Endothelial cell of umbilical vein (primary cell): ENCODE measurements at regions of chrX and their contacts with region 1.

Region 1: GRCh38 chrX:120664081-120664480 is 34.2 kb upstream of the C1GALT1C1 start:
- DNase-seq: peak; percentile 46
- H3K4me3 ChIP-seq: no peak overlapping the region
- H3K27ac ChIP-seq: no peak overlapping the region
- H3K4me1 ChIP-seq: peaks cover 5% of the 10 kb centered on the region
- H3K27me3 ChIP-seq: no peaks in the 10 kb centered on the region
- CTCF ChIP-seq: no peak
- POLR2A ChIP-seq: no peak

Region 2: DNA sequence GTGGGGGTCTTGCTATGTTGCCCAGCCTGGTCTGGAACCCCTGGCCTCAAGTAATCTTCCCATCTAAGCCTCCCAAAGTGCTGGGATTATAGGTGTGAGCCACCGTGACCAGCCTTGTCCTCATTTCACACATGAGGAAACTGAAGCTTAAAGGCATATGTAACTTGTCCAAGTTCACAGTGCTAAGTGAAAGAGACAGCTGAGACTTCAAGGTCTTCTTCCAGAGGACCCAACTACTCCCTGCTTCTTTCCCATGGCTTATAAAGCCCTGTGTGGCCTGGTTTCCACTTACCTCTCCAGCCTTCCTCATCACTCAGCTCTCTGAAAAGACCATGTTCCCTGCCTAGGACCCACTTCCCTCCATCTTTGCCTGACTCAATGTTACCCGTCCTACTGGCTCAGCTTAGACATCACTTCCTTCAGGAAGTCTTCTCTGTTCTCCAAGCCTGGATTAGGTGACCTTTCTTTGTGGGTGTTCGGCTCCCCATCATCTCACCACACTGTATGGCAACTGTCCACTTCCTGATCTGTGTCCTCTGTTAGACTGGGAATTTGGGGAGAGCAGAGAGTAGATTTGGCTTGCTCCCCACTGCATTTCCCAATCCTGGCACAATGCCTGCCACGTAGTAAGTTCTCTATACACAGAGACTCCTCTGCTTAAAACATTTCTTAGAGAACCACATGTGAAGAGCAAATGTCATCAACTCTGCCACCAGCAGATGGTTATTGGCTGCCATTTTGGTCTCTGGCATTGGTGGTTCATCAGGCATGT is 164.6 kb before region 1 on chrX:
- CTCF ChIA-PET with region 1: interaction called, 4 read pairs
- POLR2A ChIA-PET with region 1: no interaction called
- dilution Hi-C with region 1: no loop called
- intact Hi-C with region 1: loop called (anchors 1 kb)
- DNase-seq: no peak
- H3K4me3 ChIP-seq: no peak overlapping the region
- H3K27ac ChIP-seq: no peak overlapping the region
- H3K4me1 ChIP-seq: peaks cover 3% of the 10 kb centered on the region
- H3K27me3 ChIP-seq: no peaks in the 10 kb centered on the region
- CTCF ChIP-seq: no peak
- POLR2A ChIP-seq: no peak

Region 3: DNA sequence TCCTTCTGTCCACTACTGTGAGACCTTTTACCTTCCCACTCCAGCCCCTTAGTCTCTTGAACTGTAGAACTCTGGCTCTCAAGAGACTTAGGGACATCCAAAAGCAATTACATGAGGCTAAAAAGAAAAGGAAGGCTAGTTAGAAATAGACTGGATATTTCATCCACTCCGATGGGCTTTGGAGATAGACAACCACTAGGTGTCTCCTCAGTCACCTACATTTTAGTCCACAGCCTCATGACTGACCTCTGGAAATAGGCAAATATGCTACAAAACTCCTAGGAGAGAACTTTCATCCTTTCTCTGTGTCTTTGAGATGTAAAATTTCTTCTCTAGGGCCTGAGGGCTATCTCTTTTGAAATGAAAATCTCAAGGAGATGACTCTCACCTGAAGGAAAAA is 149.8 kb before region 1 on chrX:
- CTCF ChIA-PET with region 1: interaction called, 5 read pairs
- POLR2A ChIA-PET with region 1: no interaction called
- dilution Hi-C with region 1: no loop called
- intact Hi-C with region 1: loop called (anchors 5 kb)
- DNase-seq: peak; percentile 7
- H3K4me3 ChIP-seq: no peak overlapping the region
- H3K27ac ChIP-seq: no peak overlapping the region
- H3K4me1 ChIP-seq: peaks cover 7% of the 10 kb centered on the region
- H3K27me3 ChIP-seq: no peaks in the 10 kb centered on the region
- CTCF ChIP-seq: peak; percentile 14 to 33
- POLR2A ChIP-seq: no peak